Activated T-helper 2 cell treated with anti-CD3 and anti-CD28 coated beads, Interferon-gamma antibody, Interleukin-2, Interleukin-4, amounts not matched to agents 10 μg/mL and 5 μg/mL and 100 μg/mL, durations not matched to agents 14 hours and 24 hours and 36 hours (primary cell): ENCODE measurements at regions of chr11 and their contacts with region 1.

Region 1: DNA sequence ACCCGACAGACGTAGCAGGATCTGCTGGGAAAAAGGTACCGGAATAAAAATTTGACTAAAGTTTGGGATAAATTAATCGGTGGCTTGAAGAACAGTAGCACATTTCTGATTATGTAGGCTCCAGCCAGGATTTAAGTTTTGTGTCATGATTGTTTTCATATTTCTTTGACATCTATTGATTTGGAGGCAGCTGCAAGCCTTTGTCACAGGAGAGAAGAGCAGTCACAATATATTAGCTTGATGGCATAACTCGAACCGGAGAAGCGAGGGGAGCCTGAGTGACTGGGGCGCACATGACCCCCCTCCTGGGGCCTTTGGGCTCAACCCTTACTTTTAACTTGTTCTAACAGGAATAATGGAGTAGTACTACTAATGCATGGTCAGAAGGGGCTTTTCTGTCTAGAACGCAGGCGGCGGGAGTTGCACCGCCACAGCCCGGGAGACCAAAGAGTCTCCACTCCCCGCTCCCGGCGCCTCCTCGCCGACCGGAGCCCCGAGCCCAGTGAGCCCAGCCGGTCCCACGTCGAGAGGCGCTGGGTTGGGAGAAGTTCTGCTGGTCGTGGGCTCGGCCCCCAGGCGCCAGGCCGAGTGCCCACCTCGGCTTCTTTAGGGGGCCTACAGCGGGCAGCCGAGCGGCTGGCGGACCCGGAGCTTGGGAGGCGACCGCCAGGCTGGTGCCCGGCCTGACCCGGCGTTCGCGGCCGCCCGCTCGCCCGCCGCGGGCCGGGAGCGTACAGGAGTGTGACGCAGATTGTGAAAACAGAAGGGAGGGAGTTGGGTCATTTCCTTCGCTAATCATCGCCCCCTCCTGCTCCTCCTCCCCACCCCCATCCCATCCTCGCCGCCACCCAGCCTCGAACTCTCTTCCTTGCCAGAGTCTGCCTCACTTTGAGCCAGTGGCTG is 15.7 kb upstream of the PAX6 start:
- DNase-seq: no peak
- H3K4me3 Mint-ChIP-seq: no peak overlapping the region
- H3K27ac Mint-ChIP-seq: peak overlapping the region; percentile 42
- H3K4me1 Mint-ChIP-seq: peaks cover 7% of the 10 kb centered on the region
- H3K27me3 Mint-ChIP-seq: peaks cover 69% of the 10 kb centered on the region

Region 2: GRCh38 chr11:31792036-31792435 is 34.8 kb before region 1 on chr11:
- intact Hi-C with region 1: no loop called
- DNase-seq: no peak
- H3K4me3 Mint-ChIP-seq: no peak overlapping the region
- H3K27ac Mint-ChIP-seq: no peak overlapping the region
- H3K4me1 Mint-ChIP-seq: no peaks in the 10 kb centered on the region
- H3K27me3 Mint-ChIP-seq: peaks cover 34% of the 10 kb centered on the region

Region 3: DNA sequence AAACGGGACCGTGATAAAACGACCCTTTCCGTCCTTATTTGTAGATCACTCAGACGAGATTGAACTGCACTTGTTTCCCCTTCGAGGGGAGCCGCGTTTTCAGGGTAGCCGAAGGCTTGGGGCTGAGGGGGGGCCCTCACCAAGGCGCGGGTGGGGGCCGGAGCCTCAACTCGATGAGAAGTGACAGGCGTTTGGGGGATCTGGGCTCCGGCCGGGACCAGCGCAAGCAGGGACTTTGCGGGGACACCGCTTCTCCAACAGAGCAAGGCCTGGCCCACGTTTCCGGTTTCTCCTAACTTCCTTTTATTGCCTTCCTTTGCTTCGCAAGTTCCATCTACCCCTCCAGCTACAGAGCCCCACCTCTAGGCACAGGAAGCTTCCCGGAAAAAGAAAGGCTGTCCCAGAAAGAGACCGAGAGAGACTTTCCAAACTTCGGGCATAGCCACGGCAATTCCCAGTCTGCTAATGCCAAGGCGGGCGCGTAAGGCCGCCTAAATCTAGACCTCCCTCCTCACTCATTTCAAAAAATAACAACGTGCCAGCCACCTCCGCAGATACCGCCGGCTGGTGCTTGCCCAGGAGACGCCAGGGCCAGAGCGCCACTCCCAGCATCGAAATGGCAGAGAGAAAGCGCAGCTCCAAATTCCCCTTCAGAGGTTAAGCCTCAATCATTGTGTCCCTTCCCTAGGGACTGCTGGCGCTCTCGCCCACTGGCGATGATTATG is 22.3 kb before region 1 on chr11:
- intact Hi-C with region 1: loop called (anchors 2 kb)
- DNase-seq: no peak
- H3K4me3 Mint-ChIP-seq: no peak overlapping the region
- H3K27ac Mint-ChIP-seq: no peak overlapping the region
- H3K4me1 Mint-ChIP-seq: peaks cover 9% of the 10 kb centered on the region
- H3K27me3 Mint-ChIP-seq: peaks cover 86% of the 10 kb centered on the region

Region 4: GRCh38 chr11:31958076-31958735 is 131.4 kb after region 1 on chr11:
- intact Hi-C with region 1: loop called (anchors 10 kb)
- DNase-seq: peak; percentile 44
- H3K4me3 Mint-ChIP-seq: no peak overlapping the region
- H3K27ac Mint-ChIP-seq: no peak overlapping the region
- H3K4me1 Mint-ChIP-seq: peaks cover 3% of the 10 kb centered on the region
- H3K27me3 Mint-ChIP-seq: no peaks in the 10 kb centered on the region

Region 5: GRCh38 chr11:32333320-32333991 is 506.7 kb after region 1 on chr11:
- intact Hi-C with region 1: loop called (anchors 10 kb)
- DNase-seq: no peak
- H3K4me3 Mint-ChIP-seq: peak overlapping the region; percentile 45
- H3K27ac Mint-ChIP-seq: no peak overlapping the region
- H3K4me1 Mint-ChIP-seq: peaks cover 4% of the 10 kb centered on the region
- H3K27me3 Mint-ChIP-seq: peaks cover 43% of the 10 kb centered on the region